Naive thymus-derived CD8-positive, alpha-beta T cell (primary cell): ENCODE measurements at regions of chr14 and their contacts with region 1.

Region 1: DNA sequence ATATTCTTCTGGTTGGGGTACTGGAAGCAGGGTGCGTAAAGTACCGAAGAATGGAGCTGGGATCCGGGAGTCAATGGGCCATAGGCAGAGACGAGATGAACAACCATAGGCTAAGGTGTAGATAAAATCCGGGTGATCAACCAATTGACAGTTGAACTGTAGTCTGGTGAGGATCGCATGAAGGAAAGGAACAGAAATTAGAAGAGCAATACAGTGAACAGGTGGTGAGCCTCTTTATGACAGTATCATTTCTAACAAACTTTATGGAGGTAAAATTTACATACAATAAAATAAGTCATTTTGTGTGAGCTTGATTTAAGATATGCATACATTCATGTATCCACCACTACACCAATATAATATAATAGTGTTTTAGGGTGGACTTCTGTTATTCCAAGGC is 13.9 kb upstream of the HIF1A start:
- DNase-seq: no peak
- ATAC-seq: no peak
- H3K4me3 Mint-ChIP-seq: no peak overlapping the region
- H3K27ac Mint-ChIP-seq: no peak overlapping the region
- H3K4me1 Mint-ChIP-seq: peaks cover 5 to 13% (median 9%) of the 10 kb centered on the region in 4 donors
- H3K27me3 Mint-ChIP-seq: no peaks in the 10 kb centered on the region

Region 2: GRCh38 chr14:61609191-61609843 is 72.1 kb before region 1 on chr14:
- POLR2A ChIA-PET with region 1: no interaction called
- DNase-seq: no peak
- ATAC-seq: no peak
- H3K4me3 Mint-ChIP-seq: no peak overlapping the region
- H3K27ac Mint-ChIP-seq: no peak overlapping the region
- H3K4me1 Mint-ChIP-seq: peaks cover 5 to 22% (median 10%) of the 10 kb centered on the region in 4 donors
- H3K27me3 Mint-ChIP-seq: no peaks in the 10 kb centered on the region

Region 3: DNA sequence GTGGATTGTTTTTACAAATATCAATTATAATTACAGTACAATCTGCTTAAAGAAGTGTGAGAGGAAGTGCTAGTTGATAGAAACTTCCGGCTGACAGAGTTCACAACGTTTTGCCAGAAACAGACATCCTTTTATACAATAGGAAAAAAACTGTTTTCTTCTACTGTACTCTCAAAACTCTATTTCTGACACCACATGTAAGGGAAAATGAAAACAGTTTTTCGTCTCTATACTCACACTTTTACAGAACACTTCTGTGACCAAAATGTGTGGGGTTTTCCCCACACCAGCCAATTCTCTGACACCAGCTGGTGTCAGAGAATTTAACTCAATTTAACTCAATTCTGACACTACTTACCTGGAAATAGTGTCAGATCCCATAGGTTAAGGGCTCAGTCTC is 10.3 kb before region 1 on chr14:
- POLR2A ChIA-PET with region 1: interaction called, 19 read pairs
- DNase-seq: peak; percentile 8 to 85 (median 40)
- ATAC-seq: peak; percentile 93 to 97
- H3K4me3 Mint-ChIP-seq: no peak overlapping the region
- H3K27ac Mint-ChIP-seq: no peak overlapping the region
- H3K4me1 Mint-ChIP-seq: peaks cover 0 to 18% (median 15%) of the 10 kb centered on the region in 4 donors
- H3K27me3 Mint-ChIP-seq: no peaks in the 10 kb centered on the region